ENCODE measurements at regions of chr10 and their contacts with region 1.

Region 1: GRCh38 chr10:68163735-68164134 is 54.4 kb downstream of the MYPN start:
- DNase-seq: no peak
- H3K4me3 ChIP-seq: no peak overlapping the region
- H3K27ac ChIP-seq: no peak overlapping the region
- H3K4me1 ChIP-seq: peaks cover 12 to 17% of the 10 kb centered on the region in 2 donors
- H3K27me3 ChIP-seq: no peaks in the 10 kb centered on the region
- CTCF ChIP-seq: no peak
- POLR2A ChIP-seq: no peak

Region 2: DNA sequence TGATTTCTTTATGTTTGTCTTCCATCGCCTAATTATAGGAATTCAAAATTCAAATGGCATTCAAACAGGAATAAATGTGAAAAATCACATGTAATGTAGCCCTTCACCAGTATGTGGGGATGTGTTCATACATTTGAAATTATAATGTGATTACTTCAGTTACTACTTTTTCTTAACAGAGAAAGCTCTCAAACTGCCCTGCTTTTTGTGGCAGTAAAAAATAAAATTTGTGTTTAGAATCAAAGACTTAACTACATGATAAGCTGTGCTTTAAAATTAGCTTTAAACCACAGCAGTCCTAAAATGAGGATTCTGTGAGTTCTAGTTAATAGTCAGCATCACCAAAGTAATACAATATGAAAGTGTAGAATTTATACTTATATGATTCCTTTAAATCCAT is 80.9 kb before region 1 on chr10:
- intact Hi-C with region 1: loop called (anchors 5 to 10 kb)
- DNase-seq: no peak
- H3K4me3 ChIP-seq: no peak overlapping the region
- H3K27ac ChIP-seq: no peak overlapping the region
- H3K4me1 ChIP-seq: no peaks in the 10 kb centered on the region
- H3K27me3 ChIP-seq: no peaks in the 10 kb centered on the region
- CTCF ChIP-seq: peak; percentile 28 to 78 (median 64)
- POLR2A ChIP-seq: no peak

Region 3: GRCh38 chr10:68331455-68332258 is 167.9 kb after region 1 on chr10 and contains the start of gene HNRNPH3:
- intact Hi-C with region 1: no loop called
- DNase-seq: peak; percentile 97 to 99 (median 99)
- H3K4me3 ChIP-seq: peak within 1 kb of the TSS; percentile 76 to 98 (median 84)
- H3K27ac ChIP-seq: peak within 1 kb of the TSS; percentile 98 to 100 (median 99)
- H3K4me1 ChIP-seq: peaks cover 42 to 57% of the 10 kb centered on the region in 2 donors
- H3K27me3 ChIP-seq: no peaks in the 10 kb centered on the region
- CTCF ChIP-seq: peak in 4 of 6 experiments; percentile 8 to 52 (median 32)
- POLR2A ChIP-seq: peak; percentile 98 to 100
- total RNA-seq, gene HNRNPH3: 12.9 to 113 (median 34.3) TPM